Panc1 (cell line): ENCODE measurements at regions of chr16 and their contacts with region 1.

Region 1: DNA sequence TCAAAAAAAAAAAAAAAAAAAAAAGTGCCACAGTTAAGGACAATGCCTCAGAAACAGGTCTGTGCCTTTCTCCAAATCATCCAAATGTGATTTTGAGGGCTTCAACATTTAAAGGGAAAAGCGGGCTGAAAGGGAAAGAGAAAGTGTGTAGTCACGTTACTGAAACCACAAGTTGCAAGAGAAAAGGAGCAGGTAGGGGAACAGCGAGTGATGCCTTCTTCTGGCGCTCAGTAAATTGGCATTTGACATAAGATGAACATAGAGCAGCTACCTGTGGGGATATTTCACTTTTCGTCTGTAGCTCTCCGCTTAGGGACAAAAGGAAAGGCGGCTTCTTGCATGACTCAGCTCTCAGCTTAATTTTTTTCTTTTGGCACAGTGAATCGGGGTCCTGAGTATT is 11.1 kb downstream of the CMTM2 start:
- DNase-seq: no peak
- ATAC-seq: no peak
- H3K4me3 ChIP-seq: 0 out of 4 replicates have a peak overlapping the region, but pooled peaks of 1 of the 2 experiments have one; percentile 8
- H3K27ac ChIP-seq: no peak overlapping the region
- H3K4me1 ChIP-seq: no peaks in the 10 kb centered on the region
- H3K27me3 ChIP-seq: no peaks in the 10 kb centered on the region
- CTCF ChIP-seq: no peak

Region 2: GRCh38 chr16:66275775-66276428 is 314.4 kb before region 1 on chr16:
- CTCF ChIA-PET with region 1: no interaction called
- POLR2A ChIA-PET with region 1: no interaction called
- in situ Hi-C with region 1: no loop called
- intact Hi-C with region 1: no loop called
- DNase-seq: peak; percentile 32
- ATAC-seq: peak; percentile 77
- H3K4me3 ChIP-seq: no peak overlapping the region
- H3K27ac ChIP-seq: no peak overlapping the region
- H3K4me1 ChIP-seq: no peaks in the 10 kb centered on the region
- H3K27me3 ChIP-seq: no peaks in the 10 kb centered on the region
- CTCF ChIP-seq: peak; percentile 71

Region 3: DNA sequence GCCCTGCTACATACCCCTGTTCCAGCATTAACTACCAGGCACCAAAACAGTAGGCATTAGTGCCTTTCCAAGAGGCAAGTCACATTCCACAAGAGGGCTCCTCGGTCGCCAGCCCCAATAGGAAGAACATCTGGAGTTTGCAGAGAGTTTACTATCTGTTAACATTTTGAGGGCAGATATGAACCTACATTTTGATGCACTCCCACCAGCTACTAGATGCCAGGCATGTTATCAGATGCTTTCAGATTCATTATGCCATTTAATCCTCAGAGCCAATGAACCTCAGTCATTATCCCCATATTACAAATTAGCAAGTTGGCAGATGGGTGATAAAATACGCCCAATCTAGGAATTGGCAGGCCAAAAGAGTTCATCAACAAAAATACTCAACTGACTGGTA is 15.3 kb before region 1 on chr16:
- CTCF ChIA-PET with region 1: no interaction called
- POLR2A ChIA-PET with region 1: interaction called, 10 read pairs
- in situ Hi-C with region 1: no loop called
- intact Hi-C with region 1: no loop called
- DNase-seq: no peak
- ATAC-seq: no peak
- H3K4me3 ChIP-seq: no peak overlapping the region
- H3K27ac ChIP-seq: no peak overlapping the region
- H3K4me1 ChIP-seq: no peaks in the 10 kb centered on the region
- H3K27me3 ChIP-seq: no peaks in the 10 kb centered on the region
- CTCF ChIP-seq: no peak

Region 4: DNA sequence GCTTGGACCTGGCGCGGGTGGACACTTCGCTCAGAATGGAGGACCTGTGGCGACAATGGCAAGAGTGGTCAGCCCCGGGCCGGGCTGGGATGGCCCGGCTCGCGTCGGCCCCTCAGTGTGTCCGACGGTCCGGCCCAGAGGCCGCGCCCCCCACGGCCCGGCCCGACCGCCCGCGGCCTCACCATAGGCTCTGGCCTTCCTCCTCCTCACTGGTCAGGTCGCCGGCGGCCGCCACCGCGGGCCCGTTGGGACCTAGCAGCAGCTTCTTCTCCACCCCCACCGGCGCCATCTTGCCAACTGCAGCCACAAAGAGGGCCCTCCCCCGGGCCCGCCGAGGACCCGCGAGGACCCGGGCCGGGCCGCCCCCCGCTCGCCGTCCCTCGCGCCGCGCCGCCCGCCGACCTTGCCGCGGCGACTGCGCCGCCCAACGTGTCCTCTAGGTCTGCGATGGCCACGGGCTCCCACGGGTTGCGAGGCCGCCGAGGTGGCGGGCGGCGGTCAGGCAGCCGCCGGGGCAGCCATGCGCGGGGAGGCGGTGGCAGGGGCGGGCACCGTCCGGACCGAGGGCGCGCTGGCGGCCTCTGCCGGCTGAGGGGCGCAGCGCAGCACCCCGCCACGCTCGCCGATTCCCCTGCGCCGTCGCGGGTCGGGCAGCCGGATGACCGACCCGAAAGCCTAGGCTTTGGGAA is 161.1 kb after region 1 on chr16 and contains the start of gene DYNC1LI2:
- CTCF ChIA-PET with region 1: no interaction called
- POLR2A ChIA-PET with region 1: no interaction called
- in situ Hi-C with region 1: no loop called
- intact Hi-C with region 1: no loop called
- DNase-seq: no peak
- ATAC-seq: peak; percentile 96
- H3K4me3 ChIP-seq: peak within 1 kb of the TSS; percentile 79 to 94
- H3K27ac ChIP-seq: peak within 1 kb of the TSS; percentile 74
- H3K4me1 ChIP-seq: peaks cover 11% of the 10 kb centered on the region
- H3K27me3 ChIP-seq: no peaks in the 10 kb centered on the region
- CTCF ChIP-seq: peak; percentile 96
- total RNA-seq, gene DYNC1LI2: 103 TPM